ENCODE measurements at regions of chr2 and their contacts with region 1.

Region 1: DNA sequence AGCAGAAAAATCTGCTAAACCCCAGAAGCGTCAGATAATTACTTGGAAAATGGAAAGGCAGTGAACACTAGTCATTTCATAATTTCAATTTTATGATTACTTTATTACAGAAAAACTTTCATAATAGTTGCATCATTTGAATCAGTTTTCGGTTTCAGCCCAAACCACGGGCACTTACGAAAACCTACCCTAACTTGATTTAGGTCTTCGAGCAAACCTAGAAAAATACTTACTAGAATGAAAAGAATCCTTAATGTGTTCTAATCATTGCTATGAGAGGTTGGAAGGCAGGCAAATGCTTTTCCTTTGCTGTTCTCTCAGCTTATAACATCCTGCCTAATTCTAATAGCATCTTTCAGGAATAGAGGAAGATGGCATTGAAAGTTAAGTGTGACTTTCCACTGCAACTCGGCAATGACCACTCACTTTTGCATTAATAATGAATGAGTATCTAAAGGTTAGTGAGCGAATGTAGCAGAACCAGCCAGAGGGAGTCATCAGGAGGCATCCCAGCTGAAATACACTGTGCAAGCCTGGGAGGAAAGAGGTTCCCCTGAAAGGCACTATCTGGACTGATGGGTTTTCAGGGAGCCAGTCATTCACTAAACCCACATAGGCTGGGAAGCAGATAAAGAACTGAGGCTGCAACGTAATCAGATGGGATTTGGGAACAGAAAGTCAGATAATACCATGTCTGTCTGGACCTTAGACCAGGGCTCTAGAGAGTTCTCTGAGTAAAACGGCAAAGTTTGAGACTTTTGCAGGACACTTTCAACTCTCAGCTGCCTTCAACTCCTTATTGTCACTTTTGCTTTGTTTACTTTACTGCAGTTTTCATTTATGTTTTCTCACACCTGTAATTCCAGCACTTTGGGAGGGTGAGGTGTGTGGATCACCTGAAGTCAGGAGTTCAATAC is 520.8 kb downstream of the RNF144A start:
- DNase-seq: peak; percentile 65
- H3K4me3 Mint-ChIP-seq: peak overlapping the region; percentile 29
- H3K27ac Mint-ChIP-seq: peak overlapping the region; percentile 91
- H3K4me1 Mint-ChIP-seq: peaks cover 74% of the 10 kb centered on the region
- H3K27me3 Mint-ChIP-seq: peaks cover 7% of the 10 kb centered on the region

Region 2: GRCh38 chr2:7467782-7468447 is 29.9 kb after region 1 on chr2:
- CTCF ChIA-PET with region 1: no interaction called
- POLR2A ChIA-PET with region 1: no interaction called
- intact Hi-C with region 1: loop called (anchors 1 kb)
- DNase-seq: peak; percentile 75
- H3K4me3 Mint-ChIP-seq: peak overlapping the region; percentile 17
- H3K27ac Mint-ChIP-seq: peak overlapping the region; percentile 95
- H3K4me1 Mint-ChIP-seq: peaks cover 41% of the 10 kb centered on the region
- H3K27me3 Mint-ChIP-seq: peaks cover 7% of the 10 kb centered on the region

Region 3: GRCh38 chr2:7523481-7524120 is 85.6 kb after region 1 on chr2:
- CTCF ChIA-PET with region 1: no interaction called
- POLR2A ChIA-PET with region 1: interaction called, 6 read pairs
- intact Hi-C with region 1: loop called (anchors 1 kb)
- DNase-seq: no peak
- H3K4me3 Mint-ChIP-seq: peak overlapping the region; percentile 58
- H3K27ac Mint-ChIP-seq: peak overlapping the region; percentile 91
- H3K4me1 Mint-ChIP-seq: peaks cover 50% of the 10 kb centered on the region
- H3K27me3 Mint-ChIP-seq: no peaks in the 10 kb centered on the region

Region 4: DNA sequence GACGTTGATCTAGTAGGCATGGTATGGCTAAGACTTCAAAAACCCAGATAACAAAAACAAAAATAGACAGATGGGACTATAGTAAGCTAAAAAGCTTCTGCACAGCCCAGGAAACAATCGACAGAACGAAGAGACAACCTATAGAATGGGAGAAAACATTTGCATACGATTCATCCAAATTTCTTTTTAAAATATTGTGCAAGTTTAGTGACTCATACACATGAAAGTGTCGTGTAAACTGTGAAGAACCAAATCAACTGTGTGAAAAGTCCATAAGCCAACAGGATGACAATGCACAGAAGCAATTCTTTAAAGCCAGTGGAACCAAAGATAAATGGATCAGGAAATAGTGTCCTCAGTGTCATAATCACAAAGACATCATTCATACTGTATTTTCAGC is 150.3 kb after region 1 on chr2:
- CTCF ChIA-PET with region 1: interaction called, 3 read pairs
- POLR2A ChIA-PET with region 1: no interaction called
- intact Hi-C with region 1: loop called (anchors 5 kb)
- DNase-seq: no peak
- H3K4me3 Mint-ChIP-seq: no peak overlapping the region
- H3K27ac Mint-ChIP-seq: peak overlapping the region; percentile 71
- H3K4me1 Mint-ChIP-seq: peaks cover 31% of the 10 kb centered on the region
- H3K27me3 Mint-ChIP-seq: peaks cover 3% of the 10 kb centered on the region

Region 5: DNA sequence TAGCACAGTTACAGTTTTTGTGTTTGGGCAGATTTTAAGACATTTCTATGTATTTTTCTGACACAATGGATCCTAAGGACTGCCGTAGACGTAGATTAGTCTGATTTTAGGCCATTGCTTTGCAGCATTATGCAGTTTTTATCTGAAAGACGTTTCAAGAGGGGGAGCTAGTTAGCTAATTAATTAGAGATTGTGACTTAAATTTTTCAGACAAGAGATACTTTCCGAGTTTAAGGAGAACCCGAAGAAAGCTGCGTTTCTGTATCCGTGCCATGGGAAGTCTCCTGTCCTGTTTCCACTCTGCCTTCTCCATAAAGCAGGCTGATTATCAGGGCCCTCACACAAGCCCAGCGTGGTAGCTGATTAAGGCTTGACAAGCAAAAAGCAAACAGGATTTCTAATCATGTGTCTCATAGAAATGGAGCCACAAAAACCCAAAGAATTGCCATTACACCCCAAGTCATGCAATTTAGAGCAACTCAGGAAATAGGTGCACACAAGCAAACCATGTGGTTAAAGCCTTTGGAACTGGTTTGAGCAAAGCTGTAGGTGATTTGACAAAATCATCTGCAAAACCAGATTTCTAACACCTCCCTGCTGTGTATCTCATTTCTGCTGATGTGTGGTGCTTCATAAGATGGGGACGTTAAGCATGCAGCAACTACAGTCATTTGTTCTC is 287.3 kb after region 1 on chr2:
- CTCF ChIA-PET with region 1: no interaction called
- POLR2A ChIA-PET with region 1: no interaction called
- intact Hi-C with region 1: loop called (anchors 2 kb)
- DNase-seq: peak; percentile 46
- H3K4me3 Mint-ChIP-seq: peak overlapping the region; percentile 68
- H3K27ac Mint-ChIP-seq: peak overlapping the region; percentile 80
- H3K4me1 Mint-ChIP-seq: peaks cover 36% of the 10 kb centered on the region
- H3K27me3 Mint-ChIP-seq: no peaks in the 10 kb centered on the region

Region 6: DNA sequence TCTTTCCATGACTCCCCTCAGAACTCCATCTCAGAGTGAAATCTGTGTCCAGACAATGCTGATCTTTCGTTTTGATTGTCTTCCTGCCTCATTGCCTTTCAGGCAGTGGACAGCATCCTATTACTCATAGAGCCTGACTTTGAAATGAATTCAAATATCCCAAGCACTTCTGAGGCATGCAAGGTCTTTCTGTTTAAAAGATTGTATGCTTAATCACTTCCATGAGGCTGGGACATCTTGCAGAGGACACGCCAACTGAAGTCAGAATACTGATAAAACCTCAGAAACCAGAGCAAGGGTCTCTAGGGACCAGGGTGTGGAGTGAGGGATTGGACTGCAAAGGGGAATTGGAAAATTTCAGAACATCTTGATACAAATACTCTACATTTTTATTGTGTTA is 407.4 kb after region 1 on chr2:
- CTCF ChIA-PET with region 1: no interaction called
- POLR2A ChIA-PET with region 1: no interaction called
- intact Hi-C with region 1: loop called (anchors 1 kb)
- DNase-seq: no peak
- H3K4me3 Mint-ChIP-seq: no peak overlapping the region
- H3K27ac Mint-ChIP-seq: no peak overlapping the region
- H3K4me1 Mint-ChIP-seq: peaks cover 36% of the 10 kb centered on the region
- H3K27me3 Mint-ChIP-seq: peaks cover 7% of the 10 kb centered on the region

Measured in activated CD4-positive, alpha-beta memory T cell treated with anti-CD3 and anti-CD28 coated beads for 36 hours (primary cell).